ENCODE measurements at regions of chr11 and their contacts with region 1.

Region 1: GRCh38 chr11:123103326-123103980 is 41.5 kb upstream of the HSPA8 start:
- DNase-seq: peak; percentile 46
- H3K4me3 ChIP-seq: no peak overlapping the region
- H3K27me3 ChIP-seq: no peaks in the 10 kb centered on the region
- CTCF ChIP-seq: peak; percentile 66

Region 2: GRCh38 chr11:123062158-123062891 is 41.1 kb before region 1 on chr11:
- CTCF ChIA-PET with region 1: no interaction called
- POLR2A ChIA-PET with region 1: interaction called, 20 read pairs
- DNase-seq: peak; percentile 99
- H3K4me3 ChIP-seq: peak overlapping the region; percentile 85
- H3K27me3 ChIP-seq: no peaks in the 10 kb centered on the region
- CTCF ChIP-seq: no peak

Measured in BJ (cell line).